Ascending aorta (tissue), 2 donors: ENCODE measurements at regions of chr21 and their contacts with region 1.

Region 1: GRCh38 chr21:44892536-44893277 is 19.2 kb upstream of the PTTG1IP start:
- DNase-seq: peak in 1 of 2 donors; percentile 83
- H3K4me3 ChIP-seq: no peak overlapping the region
- H3K27ac ChIP-seq: no peak overlapping the region
- H3K4me1 ChIP-seq: no peaks in the 10 kb centered on the region
- H3K27me3 ChIP-seq: no peaks in the 10 kb centered on the region
- CTCF ChIP-seq: peak; percentile 73 to 88 (median 86)

Region 2: GRCh38 chr21:44932408-44933181 is 39.9 kb after region 1 on chr21:
- intact Hi-C with region 1: loop called (anchors 5 kb)
- DNase-seq: no peak
- H3K4me3 ChIP-seq: peak overlapping the region; percentile 47 to 66
- H3K27ac ChIP-seq: no peak overlapping the region
- H3K4me1 ChIP-seq: peaks cover 19 to 22% of the 10 kb centered on the region in 2 donors
- H3K27me3 ChIP-seq: peaks cover 13% of the 10 kb centered on the region
- CTCF ChIP-seq: peak; percentile 37 to 72 (median 49)